PC-3 (cell line): ENCODE measurements at regions of chr3 and their contacts with region 1.

Region 1: GRCh38 chr3:125202197-125202596 is 10.4 kb downstream of the SLC12A8 start:
- DNase-seq: peak; percentile 47
- ATAC-seq: peak; percentile 72
- H3K4me3 ChIP-seq: no peak overlapping the region
- H3K27ac ChIP-seq: no peak overlapping the region
- H3K4me1 ChIP-seq: no peaks in the 10 kb centered on the region
- H3K27me3 ChIP-seq: no peaks in the 10 kb centered on the region
- CTCF ChIP-seq: peak; percentile 58

Region 2: GRCh38 chr3:124995460-124995994 is 206.7 kb before region 1 on chr3:
- CTCF ChIA-PET with region 1: interaction called, 7 read pairs
- POLR2A ChIA-PET with region 1: no interaction called
- intact Hi-C with region 1: loop called (anchors 1 kb)
- DNase-seq: peak; percentile 75
- ATAC-seq: peak; percentile 98
- H3K4me3 ChIP-seq: no peak overlapping the region
- H3K27ac ChIP-seq: no peak overlapping the region
- H3K4me1 ChIP-seq: peaks cover 8% of the 10 kb centered on the region; the same call in 1 of the 2 replicates
- H3K27me3 ChIP-seq: no peaks in the 10 kb centered on the region
- CTCF ChIP-seq: peak; percentile 83

Region 3: GRCh38 chr3:125107861-125108567 is 94.2 kb before region 1 on chr3:
- CTCF ChIA-PET with region 1: no interaction called
- POLR2A ChIA-PET with region 1: no interaction called
- intact Hi-C with region 1: loop called (anchors 5 kb)
- DNase-seq: peak; percentile 69
- ATAC-seq: peak; percentile 78
- H3K4me3 ChIP-seq: no peak overlapping the region
- H3K27ac ChIP-seq: peak overlapping the region; percentile 76
- H3K4me1 ChIP-seq: peaks cover 34% of the 10 kb centered on the region
- H3K27me3 ChIP-seq: no peaks in the 10 kb centered on the region
- CTCF ChIP-seq: no peak